GM12878 (cell line): ENCODE measurements at regions of chr15 and their contacts with region 1.

Region 1: DNA sequence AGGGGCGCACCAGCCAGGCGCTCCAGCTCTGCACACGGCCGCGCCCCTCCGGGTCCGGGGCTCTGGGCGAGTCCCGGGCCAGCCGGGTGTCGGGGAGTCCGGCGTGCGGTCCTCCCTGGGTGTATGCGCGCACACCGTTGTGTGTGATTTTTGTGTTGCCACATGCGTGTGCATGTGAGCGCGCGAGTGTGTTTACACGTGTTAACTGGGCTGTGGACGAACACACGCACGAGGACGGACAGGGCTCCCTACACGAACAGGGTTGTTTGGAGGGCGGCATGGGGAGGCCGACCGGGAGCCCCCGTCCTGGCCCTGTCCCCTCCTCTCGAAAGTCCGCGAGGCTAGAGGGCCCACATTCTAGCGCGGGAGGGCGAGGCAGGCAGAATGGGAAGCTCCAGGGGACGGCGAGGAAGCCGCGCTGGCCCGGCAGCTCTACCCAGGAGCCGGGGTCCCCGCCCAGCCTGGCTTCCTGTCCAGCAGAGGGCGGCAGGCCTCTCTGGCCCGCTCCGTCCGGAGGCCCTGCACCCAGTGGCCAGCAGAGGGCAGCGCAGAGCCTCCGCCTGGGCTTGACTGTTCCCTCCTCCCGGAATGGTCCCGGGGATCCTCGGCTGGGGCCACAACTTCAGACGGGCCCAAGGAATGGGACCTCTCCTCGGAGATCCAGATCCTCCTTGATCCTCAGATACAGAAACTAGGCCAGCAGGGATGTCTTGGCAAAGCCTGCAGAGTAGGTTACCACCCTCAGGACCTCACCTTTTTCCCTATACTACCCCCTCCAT is 611 bp upstream of the LINGO1 start:
- DNase-seq: no peak
- ATAC-seq: peak; percentile 98
- H3K4me3 ChIP-seq: peak overlapping the region; percentile 29; the same call in 1 of the 2 replicates
- H3K27ac ChIP-seq: no peak overlapping the region
- H3K4me1 ChIP-seq: no peaks in the 10 kb centered on the region; the same call in 1 of the 2 replicates
- H3K27me3 ChIP-seq: peaks cover 16 to 18% of the 10 kb centered on the region in 2 experiments
- CTCF ChIP-seq: peak; percentile 99 to 100 (median 100); a peak in 5 of 6 replicates
- EP300 ChIP-seq: no peak
- POLR2A ChIP-seq: no peak
- RAD21 ChIP-seq: peak; percentile 63

Region 2: GRCh38 chr15:77617476-77618230 is 15.7 kb before region 1 on chr15:
- CTCF ChIA-PET with region 1: interaction called, 17 read pairs
- POLR2A ChIA-PET with region 1: no interaction called
- RAD21 ChIA-PET with region 1: no interaction called
- SMC1A ChIA-PET with region 1: no interaction called
- in situ Hi-C with region 1: no loop called
- intact Hi-C with region 1: no loop called
- DNase-seq: no peak
- ATAC-seq: no peak; the same call in 2 of the 3 replicates
- H3K4me3 ChIP-seq: no peak overlapping the region
- H3K27ac ChIP-seq: no peak overlapping the region
- H3K4me1 ChIP-seq: no peaks in the 10 kb centered on the region
- H3K27me3 ChIP-seq: no peaks in the 10 kb centered on the region; a peak in 1 of 4 replicates
- CTCF ChIP-seq: peak; percentile 23 to 43 (median 36); a peak in 4 of 6 replicates
- EP300 ChIP-seq: no peak
- POLR2A ChIP-seq: no peak
- RAD21 ChIP-seq: no peak

Region 3: GRCh38 chr15:77650265-77650664 is 16.9 kb after region 1 on chr15:
- CTCF ChIA-PET with region 1: interaction called, 10 read pairs
- POLR2A ChIA-PET with region 1: no interaction called
- RAD21 ChIA-PET with region 1: interaction called, 3 read pairs
- SMC1A ChIA-PET with region 1: interaction called, 3 read pairs
- in situ Hi-C with region 1: no loop called
- intact Hi-C with region 1: no loop called
- DNase-seq: no peak
- ATAC-seq: peak; percentile 53
- H3K4me3 ChIP-seq: no peak overlapping the region
- H3K27ac ChIP-seq: no peak overlapping the region
- H3K4me1 ChIP-seq: no peaks in the 10 kb centered on the region
- H3K27me3 ChIP-seq: peaks cover 0 to 2% of the 10 kb centered on the region in 2 experiments; a peak in 2 of 4 replicates
- CTCF ChIP-seq: peak in 2 of 3 experiments; percentile 19 to 27; a peak in 2 of 6 replicates
- EP300 ChIP-seq: no peak
- POLR2A ChIP-seq: no peak
- RAD21 ChIP-seq: 0 out of 2 replicates have a peak, but pooled peaks have one; percentile 3

Region 4: GRCh38 chr15:77870195-77871065 is 237.1 kb after region 1 on chr15:
- CTCF ChIA-PET with region 1: interaction called, 9 read pairs
- POLR2A ChIA-PET with region 1: no interaction called
- RAD21 ChIA-PET with region 1: interaction called, 4 read pairs
- SMC1A ChIA-PET with region 1: interaction called, 3 read pairs
- in situ Hi-C with region 1: no loop called
- intact Hi-C with region 1: loop called (anchors 1 kb)
- DNase-seq: no peak
- ATAC-seq: peak; percentile 88
- H3K4me3 ChIP-seq: no peak overlapping the region
- H3K27ac ChIP-seq: no peak overlapping the region
- H3K4me1 ChIP-seq: no peaks in the 10 kb centered on the region
- H3K27me3 ChIP-seq: no peaks in the 10 kb centered on the region; a peak in 1 of 4 replicates
- CTCF ChIP-seq: peak; percentile 76 to 86 (median 78)
- EP300 ChIP-seq: no peak
- POLR2A ChIP-seq: no peak
- RAD21 ChIP-seq: peak; percentile 47

Region 5: GRCh38 chr15:79209690-79210089 is 1576.4 kb after region 1 on chr15:
- CTCF ChIA-PET with region 1: no interaction called
- POLR2A ChIA-PET with region 1: no interaction called
- RAD21 ChIA-PET with region 1: no interaction called
- SMC1A ChIA-PET with region 1: no interaction called
- in situ Hi-C with region 1: no loop called
- intact Hi-C with region 1: no loop called
- DNase-seq: no peak
- ATAC-seq: no peak
- H3K4me3 ChIP-seq: no peak overlapping the region
- H3K27ac ChIP-seq: no peak overlapping the region
- H3K4me1 ChIP-seq: no peaks in the 10 kb centered on the region
- H3K27me3 ChIP-seq: peaks cover 6 to 7% of the 10 kb centered on the region in 2 experiments
- CTCF ChIP-seq: no peak; a peak in 1 of 6 replicates
- EP300 ChIP-seq: no peak
- POLR2A ChIP-seq: no peak
- RAD21 ChIP-seq: no peak